Activated naive CD4-positive, alpha-beta T cell treated with anti-CD3 and anti-CD28 coated beads for 36 hours (primary cell): ENCODE measurements at regions of chr15 and their contacts with region 1.

Region 1: DNA sequence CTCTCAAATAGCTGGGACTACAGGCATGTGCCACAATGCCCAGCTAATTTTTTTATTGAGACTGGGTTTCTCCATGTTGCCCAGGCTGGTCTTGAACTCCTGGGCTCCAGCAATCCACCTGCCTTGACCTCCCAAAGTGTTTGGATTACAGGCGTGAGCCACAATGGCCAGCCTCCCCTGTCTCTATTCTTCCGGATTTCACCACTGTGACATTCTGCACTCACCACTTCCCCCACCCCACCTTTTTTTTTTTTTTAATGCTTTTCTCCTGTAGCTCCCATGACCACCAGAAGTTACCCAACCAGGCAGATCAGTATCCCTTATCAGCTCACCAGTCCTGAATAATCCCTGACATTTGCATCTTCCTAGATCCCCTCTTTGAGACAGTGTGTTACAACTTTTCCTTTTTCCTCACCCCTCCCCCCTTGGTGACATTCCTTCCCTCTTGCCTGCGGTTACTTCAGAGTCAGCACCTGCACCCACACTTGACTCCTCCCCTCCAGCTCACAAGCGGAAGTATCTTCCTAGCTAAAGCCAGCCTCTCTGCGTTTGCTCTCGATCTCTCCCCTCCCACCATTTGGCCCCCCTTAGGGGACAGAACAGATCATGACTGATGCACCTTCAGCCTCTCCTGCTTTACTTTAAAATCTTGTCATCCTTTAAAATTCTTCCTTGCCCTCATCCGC is 13.5 kb upstream of the ZNF592 start:
- DNase-seq: peak; percentile 90
- H3K4me3 Mint-ChIP-seq: peak overlapping the region; percentile 73
- H3K27ac Mint-ChIP-seq: peak overlapping the region; percentile 95
- H3K4me1 Mint-ChIP-seq: peaks cover 49% of the 10 kb centered on the region
- H3K27me3 Mint-ChIP-seq: no peaks in the 10 kb centered on the region

Region 2: GRCh38 chr15:84669726-84670125 is 65.2 kb before region 1 on chr15:
- CTCF ChIA-PET with region 1: no interaction called
- intact Hi-C with region 1: loop called (anchors 1 kb)
- DNase-seq: peak; percentile 59
- H3K4me3 Mint-ChIP-seq: no peak overlapping the region
- H3K27ac Mint-ChIP-seq: no peak overlapping the region
- H3K4me1 Mint-ChIP-seq: peaks cover 35% of the 10 kb centered on the region
- H3K27me3 Mint-ChIP-seq: no peaks in the 10 kb centered on the region

Region 3: GRCh38 chr15:84716036-84716799 is 18.7 kb before region 1 on chr15 and contains the start of gene SEC11A:
- CTCF ChIA-PET with region 1: interaction called, 8 read pairs
- intact Hi-C with region 1: loop called (anchors 1 kb)
- DNase-seq: peak; percentile 93
- H3K4me3 Mint-ChIP-seq: peak within 1 kb of the TSS; percentile 93
- H3K27ac Mint-ChIP-seq: peak within 1 kb of the TSS; percentile 93
- H3K4me1 Mint-ChIP-seq: peaks cover 51% of the 10 kb centered on the region
- H3K27me3 Mint-ChIP-seq: no peaks in the 10 kb centered on the region
- total RNA-seq, gene SEC11A: 87.2 to 99.1 TPM

Region 4: DNA sequence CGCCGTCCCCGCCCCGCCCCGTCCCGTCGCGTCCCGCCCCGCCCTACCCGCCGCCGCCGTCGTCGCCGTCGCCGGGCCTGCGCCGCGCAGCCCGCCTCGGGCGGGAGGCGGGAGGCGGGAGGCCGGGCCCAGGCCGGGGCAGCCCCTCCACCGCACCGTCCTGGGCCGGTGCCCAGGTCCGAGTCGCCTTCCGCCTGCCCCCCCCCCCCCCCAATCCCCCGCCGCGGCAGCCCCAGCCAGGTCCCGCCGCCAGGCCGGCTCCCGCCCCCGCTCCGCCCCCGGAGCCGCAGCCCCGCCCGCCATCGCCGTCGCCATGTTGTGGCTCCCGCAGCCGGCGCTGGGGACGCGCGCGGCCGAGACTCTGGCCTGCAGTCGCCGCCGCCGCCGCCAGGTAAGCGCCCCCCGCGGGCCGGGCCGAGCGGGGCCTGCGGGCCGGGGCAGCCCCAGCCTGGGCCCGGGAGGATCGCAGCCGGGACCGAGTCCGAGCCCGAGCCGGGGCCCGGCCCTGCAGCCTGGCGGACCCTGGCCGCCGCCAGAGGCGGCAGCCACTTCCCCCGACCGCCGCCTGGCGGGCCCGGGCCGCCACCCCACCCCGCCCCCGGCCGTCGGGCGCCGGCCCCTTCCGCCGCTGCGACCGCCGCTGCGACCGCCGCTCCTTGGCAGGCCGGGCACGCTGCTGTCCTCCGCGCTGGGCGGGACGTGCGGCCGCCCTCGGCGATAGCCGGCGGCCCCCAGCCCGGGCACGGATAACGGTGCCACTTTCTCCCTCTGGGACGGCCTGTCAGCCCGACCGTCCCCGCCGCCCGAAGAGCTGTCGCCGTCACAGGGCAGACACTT is 13.6 kb after region 1 on chr15 and contains the start of gene ZNF592:
- CTCF ChIA-PET with region 1: interaction called, 15 read pairs
- intact Hi-C with region 1: loop called (anchors 1 kb)
- DNase-seq: peak; percentile 79
- H3K4me3 Mint-ChIP-seq: peak within 1 kb of the TSS; percentile 97
- H3K27ac Mint-ChIP-seq: peak within 1 kb of the TSS; percentile 98
- H3K4me1 Mint-ChIP-seq: peaks cover 54% of the 10 kb centered on the region
- H3K27me3 Mint-ChIP-seq: no peaks in the 10 kb centered on the region
- total RNA-seq, gene ZNF592: 24.2 to 24.3 TPM

Region 5: GRCh38 chr15:84761607-84762131 is 26.7 kb after region 1 on chr15:
- CTCF ChIA-PET with region 1: no interaction called
- intact Hi-C with region 1: loop called (anchors 1 kb)
- DNase-seq: peak; percentile 20
- H3K4me3 Mint-ChIP-seq: no peak overlapping the region
- H3K27ac Mint-ChIP-seq: no peak overlapping the region
- H3K4me1 Mint-ChIP-seq: peaks cover 28% of the 10 kb centered on the region
- H3K27me3 Mint-ChIP-seq: no peaks in the 10 kb centered on the region

Region 6: GRCh38 chr15:84789762-84790161 is 54.8 kb after region 1 on chr15:
- CTCF ChIA-PET with region 1: no interaction called
- intact Hi-C with region 1: no loop called
- DNase-seq: no peak
- H3K4me3 Mint-ChIP-seq: no peak overlapping the region
- H3K27ac Mint-ChIP-seq: no peak overlapping the region
- H3K4me1 Mint-ChIP-seq: peaks cover 32% of the 10 kb centered on the region
- H3K27me3 Mint-ChIP-seq: no peaks in the 10 kb centered on the region

Region 7: GRCh38 chr15:84904419-84904818 is 169.5 kb after region 1 on chr15:
- CTCF ChIA-PET with region 1: no interaction called
- intact Hi-C with region 1: no loop called
- DNase-seq: no peak
- H3K4me3 Mint-ChIP-seq: no peak overlapping the region
- H3K27ac Mint-ChIP-seq: no peak overlapping the region
- H3K4me1 Mint-ChIP-seq: no peaks in the 10 kb centered on the region
- H3K27me3 Mint-ChIP-seq: no peaks in the 10 kb centered on the region

Region 8: GRCh38 chr15:84955089-84955848 is 220.3 kb after region 1 on chr15:
- CTCF ChIA-PET with region 1: no interaction called
- intact Hi-C with region 1: no loop called
- DNase-seq: peak; percentile 69
- H3K4me3 Mint-ChIP-seq: no peak overlapping the region
- H3K27ac Mint-ChIP-seq: no peak overlapping the region
- H3K4me1 Mint-ChIP-seq: peaks cover 8% of the 10 kb centered on the region
- H3K27me3 Mint-ChIP-seq: peaks cover 4% of the 10 kb centered on the region

Region 9: GRCh38 chr15:85702321-85703101 is 967.6 kb after region 1 on chr15:
- CTCF ChIA-PET with region 1: no interaction called
- intact Hi-C with region 1: loop called (anchors 5 kb)
- DNase-seq: peak; percentile 56
- H3K4me3 Mint-ChIP-seq: peak overlapping the region; percentile 58
- H3K27ac Mint-ChIP-seq: peak overlapping the region; percentile 98
- H3K4me1 Mint-ChIP-seq: peaks cover 71% of the 10 kb centered on the region
- H3K27me3 Mint-ChIP-seq: no peaks in the 10 kb centered on the region